Activated naive CD4-positive, alpha-beta T cell treated with anti-CD3 and anti-CD28 coated beads for 36 hours (primary cell): ENCODE measurements at regions of chr17 and their contacts with region 1.

Region 1: DNA sequence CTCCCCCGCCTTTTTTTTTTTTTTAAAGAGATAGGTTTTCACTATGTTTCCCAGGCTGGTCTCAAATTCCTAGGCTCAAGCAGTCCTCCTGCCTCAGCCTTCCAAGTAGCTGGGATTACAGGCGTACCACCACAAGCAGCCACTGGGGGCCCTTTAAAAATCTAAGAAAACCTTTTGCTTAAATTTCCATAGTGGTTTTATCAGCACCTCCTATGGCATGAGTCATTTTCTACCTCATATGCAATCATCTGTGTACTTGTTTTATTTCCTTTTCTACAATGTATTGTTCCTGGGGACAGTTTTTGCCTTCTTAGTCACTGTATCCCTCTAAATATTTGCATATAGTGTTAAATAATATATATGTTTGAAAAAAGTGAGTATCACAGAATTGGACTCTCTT is 29.2 kb downstream of the GNA13 start:
- DNase-seq: peak; percentile 77
- H3K4me3 Mint-ChIP-seq: peak overlapping the region; percentile 58
- H3K27ac Mint-ChIP-seq: peak overlapping the region; percentile 94
- H3K4me1 Mint-ChIP-seq: peaks cover 80% of the 10 kb centered on the region
- H3K27me3 Mint-ChIP-seq: no peaks in the 10 kb centered on the region

Region 2: DNA sequence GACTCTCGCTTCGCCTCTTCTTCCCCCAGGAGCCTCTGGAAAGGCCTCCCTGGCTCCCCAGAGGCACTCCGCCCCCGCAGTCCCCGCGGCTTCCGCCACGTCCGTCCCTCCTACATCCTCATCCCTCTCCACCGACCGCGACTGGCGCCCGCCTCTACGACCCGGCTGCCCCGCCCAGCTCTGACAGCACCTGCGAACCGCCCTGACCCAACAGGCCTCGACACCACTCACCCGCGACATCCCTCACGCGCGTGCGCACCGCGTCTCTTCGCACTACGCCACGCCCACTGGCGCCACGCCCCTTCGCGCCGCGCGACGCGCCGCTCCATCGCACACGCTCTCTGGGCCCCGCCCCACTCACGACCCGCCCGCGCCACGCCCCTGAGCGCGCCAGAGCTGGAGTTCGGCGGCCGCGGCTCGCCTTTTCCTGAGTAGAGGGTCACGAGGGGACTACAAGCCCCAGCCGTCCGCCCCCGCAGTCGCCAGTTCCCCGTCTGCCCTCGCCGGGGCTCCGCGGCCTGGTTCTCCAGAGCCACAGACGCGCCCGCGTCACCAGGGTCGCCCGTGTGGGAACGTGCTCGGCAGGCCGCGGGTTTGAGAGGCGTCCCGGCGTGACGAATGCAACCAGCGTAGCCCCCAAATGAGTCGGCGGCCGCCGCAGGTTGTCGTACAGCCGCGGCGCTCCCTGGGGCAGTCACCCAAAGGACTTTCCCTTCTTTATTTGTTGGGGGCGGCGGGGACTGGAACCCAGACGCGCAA is 51.8 kb before region 1 on chr17:
- CTCF ChIA-PET with region 1: interaction called, 7 read pairs
- intact Hi-C with region 1: loop called (anchors 1 kb)
- DNase-seq: peak; percentile 94
- H3K4me3 Mint-ChIP-seq: peak overlapping the region; percentile 90
- H3K27ac Mint-ChIP-seq: peak overlapping the region; percentile 91
- H3K4me1 Mint-ChIP-seq: peaks cover 45% of the 10 kb centered on the region
- H3K27me3 Mint-ChIP-seq: no peaks in the 10 kb centered on the region

Region 3: DNA sequence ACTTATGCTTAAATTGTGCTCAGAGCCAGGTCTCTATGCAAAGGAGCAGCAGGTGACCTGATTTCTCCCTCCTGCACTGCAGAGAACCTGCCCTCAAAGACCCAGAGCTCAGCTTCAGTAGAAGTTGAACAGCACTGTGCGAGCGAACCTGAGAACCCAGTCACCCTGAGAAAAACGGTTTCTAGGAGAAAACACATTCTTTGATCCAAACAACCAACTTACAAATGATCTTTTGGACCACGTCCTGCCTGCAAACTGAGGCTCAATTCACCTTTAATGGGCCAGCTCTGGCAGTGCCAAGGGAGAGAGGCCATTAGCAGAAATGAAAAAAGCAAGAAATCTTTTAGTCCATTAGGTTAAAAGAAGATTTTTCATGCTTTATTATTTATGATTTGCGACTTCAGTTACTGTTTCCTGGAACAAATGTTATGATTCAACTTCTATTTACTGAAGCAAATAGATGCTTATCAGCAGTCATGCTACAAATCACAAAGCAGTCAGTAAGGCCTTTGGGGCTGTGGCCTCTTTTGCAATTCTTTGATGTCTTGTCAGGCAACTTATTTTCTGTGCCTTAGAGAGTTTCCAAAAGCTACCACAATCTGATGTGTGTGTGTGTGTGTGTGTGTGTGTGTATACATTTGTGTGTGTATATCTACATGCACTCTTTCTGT is 42.3 kb before region 1 on chr17:
- CTCF ChIA-PET with region 1: no interaction called
- intact Hi-C with region 1: loop called (anchors 1 kb)
- DNase-seq: peak; percentile 50
- H3K4me3 Mint-ChIP-seq: peak overlapping the region; percentile 73
- H3K27ac Mint-ChIP-seq: peak overlapping the region; percentile 95
- H3K4me1 Mint-ChIP-seq: peaks cover 32% of the 10 kb centered on the region
- H3K27me3 Mint-ChIP-seq: no peaks in the 10 kb centered on the region

Region 4: GRCh38 chr17:65039336-65039988 is 12.2 kb after region 1 on chr17:
- CTCF ChIA-PET with region 1: interaction called, 10 read pairs
- intact Hi-C with region 1: loop called (anchors 1 kb)
- DNase-seq: peak; percentile 70
- H3K4me3 Mint-ChIP-seq: peak overlapping the region; percentile 39
- H3K27ac Mint-ChIP-seq: peak overlapping the region; percentile 89
- H3K4me1 Mint-ChIP-seq: peaks cover 80% of the 10 kb centered on the region
- H3K27me3 Mint-ChIP-seq: no peaks in the 10 kb centered on the region

Region 5: GRCh38 chr17:65078441-65079160 is 51.3 kb after region 1 on chr17:
- CTCF ChIA-PET with region 1: no interaction called
- intact Hi-C with region 1: no loop called
- DNase-seq: no peak
- H3K4me3 Mint-ChIP-seq: no peak overlapping the region
- H3K27ac Mint-ChIP-seq: no peak overlapping the region
- H3K4me1 Mint-ChIP-seq: no peaks in the 10 kb centered on the region
- H3K27me3 Mint-ChIP-seq: no peaks in the 10 kb centered on the region